ENCODE measurements at regions of chr3 and their contacts with region 1.

Region 1: GRCh38 chr3:58704745-58705144 is 38.2 kb upstream of the FAM3D start:
- DNase-seq: no peak
- H3K4me3 ChIP-seq: no peak overlapping the region
- H3K27ac ChIP-seq: no peak overlapping the region
- H3K4me1 ChIP-seq: no peaks in the 10 kb centered on the region
- H3K27me3 ChIP-seq: no peaks in the 10 kb centered on the region
- CTCF ChIP-seq: no peak

Region 2: DNA sequence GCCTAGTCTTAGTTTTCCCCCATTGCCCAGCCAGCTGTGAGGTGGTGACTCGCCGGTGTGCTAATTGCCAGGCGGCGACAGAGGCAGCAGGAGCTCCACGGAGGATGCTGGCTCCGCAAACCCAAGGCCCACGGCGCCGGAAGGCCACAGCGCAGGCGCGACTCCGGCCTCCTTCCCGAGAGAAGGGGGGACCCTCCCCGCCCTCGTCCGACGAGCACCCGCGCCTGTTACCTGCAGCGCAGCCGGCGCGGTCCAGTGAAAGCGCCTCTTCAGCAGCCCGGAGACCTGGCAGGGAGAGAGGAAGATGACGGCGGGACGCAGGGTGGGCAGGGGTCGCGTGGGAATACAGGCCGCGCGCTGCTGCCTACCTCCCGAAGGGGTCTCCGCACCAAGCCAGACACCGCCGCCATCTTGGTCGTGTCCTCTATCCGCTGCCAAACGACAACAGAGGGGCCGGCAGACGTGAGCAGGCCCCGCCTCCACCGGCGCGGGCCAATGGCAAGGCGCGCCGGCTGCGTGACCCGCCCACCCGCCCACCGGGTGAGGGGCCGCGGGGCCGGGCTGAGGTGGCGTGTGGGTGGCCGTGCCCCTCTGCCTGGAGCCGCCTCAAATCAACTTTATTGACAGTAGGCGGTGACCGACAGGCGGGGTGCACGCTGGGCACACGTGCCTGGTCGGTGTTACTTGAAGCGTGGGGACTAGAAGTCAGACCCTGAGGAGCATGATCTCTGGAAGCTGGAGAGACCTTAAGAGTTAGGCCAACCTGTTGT is 271.2 kb before region 1 on chr3 and contains the start of gene PDHB:
- intact Hi-C with region 1: no loop called
- DNase-seq: peak; percentile 89
- H3K4me3 ChIP-seq: peak within 1 kb of the TSS; percentile 82
- H3K27ac ChIP-seq: peak within 1 kb of the TSS; percentile 85
- H3K4me1 ChIP-seq: peaks cover 4% of the 10 kb centered on the region
- H3K27me3 ChIP-seq: no peaks in the 10 kb centered on the region
- CTCF ChIP-seq: no peak
- total RNA-seq, gene PDHB: 66.9 to 87.4 TPM

Region 3: GRCh38 chr3:58640700-58641372 is 63.9 kb before region 1 on chr3:
- intact Hi-C with region 1: loop called (anchors 5 kb)
- DNase-seq: peak; percentile 77
- H3K4me3 ChIP-seq: no peak overlapping the region
- H3K27ac ChIP-seq: no peak overlapping the region
- H3K4me1 ChIP-seq: no peaks in the 10 kb centered on the region
- H3K27me3 ChIP-seq: no peaks in the 10 kb centered on the region
- CTCF ChIP-seq: peak; percentile 82